Left cardiac atrium (tissue), 4 donors: ENCODE measurements at regions of chr7 and their contacts with region 1.

Region 1: DNA sequence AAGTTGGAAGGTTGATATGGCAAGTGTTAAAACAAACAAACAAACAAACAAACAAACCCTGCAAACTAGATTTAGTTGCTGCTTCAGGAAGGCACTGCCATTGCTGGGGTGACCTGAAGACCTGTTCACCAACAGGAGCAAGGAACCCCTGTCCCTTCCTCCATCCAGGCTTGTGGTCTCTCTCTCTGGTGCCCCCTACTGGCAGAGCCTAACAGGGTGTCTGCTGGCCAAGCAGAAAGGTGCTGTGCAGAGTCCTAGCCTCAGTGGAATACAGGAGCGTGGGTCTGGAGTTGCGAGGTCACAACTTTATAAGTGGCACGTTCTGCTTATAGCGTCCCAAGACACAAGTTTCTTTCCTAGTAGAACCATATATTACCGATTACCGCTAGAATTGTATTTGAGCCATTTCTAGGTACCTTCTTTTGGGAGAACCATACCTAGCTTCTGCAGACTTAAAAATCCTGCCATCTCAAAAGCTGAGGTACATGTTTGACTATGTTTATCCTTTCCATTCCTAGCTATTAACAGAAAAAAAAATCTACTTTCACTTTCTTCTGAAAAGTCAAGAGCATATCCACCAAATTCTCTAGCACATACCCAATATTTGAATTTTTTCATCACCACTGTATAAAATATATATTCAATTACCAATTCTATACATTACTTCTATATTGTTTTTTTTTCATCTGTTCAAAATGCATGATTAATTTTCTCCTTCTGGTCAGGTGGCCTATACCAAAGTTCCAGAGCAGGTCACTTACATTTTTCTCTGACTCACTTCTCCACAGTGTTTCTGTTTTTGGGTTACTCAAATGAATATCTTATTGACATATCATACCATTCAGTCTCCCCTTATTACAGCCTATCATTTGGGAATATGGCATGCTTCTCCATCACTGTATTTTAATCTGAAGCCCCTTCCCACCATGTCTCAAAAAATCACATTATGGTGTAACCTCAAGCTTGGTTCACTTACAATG is 29.1 kb upstream of the CALD1 start:
- DNase-seq: peak; percentile 34
- ATAC-seq: peak in 1 of 2 donors; percentile 66

Region 2: GRCh38 chr7:134632937-134633540 is 117.3 kb before region 1 on chr7:
- intact Hi-C with region 1: loop called in 1 of 2 experiments (anchors 10 kb)
- DNase-seq: no peak
- ATAC-seq: no peak

Region 3: GRCh38 chr7:134695321-134695860 is 55.0 kb before region 1 on chr7:
- intact Hi-C with region 1: loop called in 1 of 2 experiments (anchors 5 kb)
- DNase-seq: no peak
- ATAC-seq: peak in 1 of 2 donors; percentile 48